Posterior cingulate gyrus (tissue), 11 donors: ENCODE measurements at regions of chr6 and their contacts with region 1.

Region 1: GRCh38 chr6:7899101-7899888 is 11.3 kb downstream of the TXNDC5 start:
- DNase-seq: peak in 2 of 10 donors; percentile 26 to 75

Region 2: GRCh38 chr6:7827142-7827541 is 72.2 kb before region 1 on chr6:
- intact Hi-C with region 1: no loop called
- DNase-seq: no peak

Region 3: DNA sequence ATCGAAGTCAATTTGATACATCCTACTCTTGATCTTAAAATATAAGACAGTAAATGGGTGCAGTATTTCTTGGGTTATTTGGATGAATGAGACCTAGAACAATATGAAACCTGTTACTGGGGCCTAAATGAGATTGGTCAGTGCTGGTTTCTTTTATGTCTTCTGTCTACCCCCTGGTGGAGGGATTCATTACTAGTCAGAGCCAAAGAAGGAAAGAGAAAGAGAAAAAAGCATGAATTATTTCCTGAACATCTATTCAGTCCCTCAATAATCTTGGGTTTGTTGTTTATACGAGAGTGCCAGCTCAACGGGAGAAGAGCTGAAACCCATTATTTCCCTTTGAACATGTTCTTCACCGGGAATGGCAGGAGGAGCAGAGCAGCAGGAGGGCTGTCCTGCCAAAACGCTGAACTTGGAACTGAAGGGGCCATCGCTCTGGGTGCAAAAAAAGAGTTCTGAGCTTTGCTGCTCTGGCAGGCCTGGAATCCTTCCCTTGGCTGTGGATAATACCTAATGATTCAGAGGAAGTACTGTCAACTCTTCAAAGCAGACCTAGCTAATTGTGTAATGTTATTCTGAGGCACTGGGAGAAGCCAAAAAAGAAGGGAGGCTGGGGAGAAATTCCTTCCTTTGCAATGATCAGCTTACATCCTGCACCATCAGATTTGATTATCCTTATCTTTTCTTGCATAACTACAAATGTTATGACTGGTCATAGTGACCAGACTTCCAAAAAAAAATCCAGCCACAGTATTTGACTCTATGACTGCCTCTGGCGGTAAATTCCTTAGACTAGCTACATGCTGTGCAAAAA is 92.9 kb after region 1 on chr6:
- intact Hi-C with region 1: loop called (anchors 5 kb)
- DNase-seq: no peak